Cardiac septum (tissue), 1 donor: ENCODE measurements at regions of chr3 and their contacts with region 1.

Region 1: DNA sequence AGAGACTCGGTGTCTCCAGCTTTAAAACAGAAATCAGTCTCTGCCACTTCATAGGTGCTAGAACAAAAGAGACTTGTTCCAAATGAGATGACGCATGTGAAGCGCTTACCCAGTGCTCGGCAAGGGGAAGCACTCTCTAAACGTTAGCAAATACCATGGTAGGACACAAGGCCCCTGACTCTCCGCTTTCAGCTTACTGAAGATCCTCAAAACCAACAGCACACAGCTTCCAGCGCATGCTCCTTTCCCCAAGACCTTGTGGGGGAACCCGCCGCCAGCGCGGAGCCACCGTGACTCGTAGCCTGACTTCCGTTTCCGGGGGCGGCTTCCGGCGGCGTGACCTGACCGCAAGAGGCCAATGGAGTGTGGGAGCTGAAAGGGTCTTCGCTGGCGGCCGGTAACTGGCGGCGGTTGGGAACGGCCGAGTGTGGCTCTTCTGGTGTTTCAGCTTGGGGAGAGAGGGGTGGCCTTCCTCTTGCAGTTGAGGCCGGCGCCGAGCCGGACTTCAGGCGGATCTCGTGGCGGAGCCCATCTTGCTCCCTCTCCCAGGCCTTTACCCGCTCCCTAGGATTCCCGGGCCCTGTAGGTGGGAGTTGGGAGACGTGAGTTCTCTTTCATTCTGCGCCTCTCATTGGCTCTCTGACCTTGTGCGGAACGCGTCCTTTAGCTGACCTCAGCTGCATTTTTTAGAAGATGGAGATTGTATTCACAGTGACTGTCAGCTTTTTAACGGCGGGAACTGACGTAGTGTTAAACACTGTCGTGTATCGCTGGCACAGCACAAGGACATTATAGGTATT is at the start of gene THUMPD3:
- DNase-seq: peak; percentile 97
- total RNA-seq, gene THUMPD3: 53.5 TPM

Region 2: GRCh38 chr3:9396700-9397521 is 34.0 kb after region 1 on chr3:
- intact Hi-C with region 1: loop called (anchors 5 kb)
- DNase-seq: peak; percentile 100

Region 3: DNA sequence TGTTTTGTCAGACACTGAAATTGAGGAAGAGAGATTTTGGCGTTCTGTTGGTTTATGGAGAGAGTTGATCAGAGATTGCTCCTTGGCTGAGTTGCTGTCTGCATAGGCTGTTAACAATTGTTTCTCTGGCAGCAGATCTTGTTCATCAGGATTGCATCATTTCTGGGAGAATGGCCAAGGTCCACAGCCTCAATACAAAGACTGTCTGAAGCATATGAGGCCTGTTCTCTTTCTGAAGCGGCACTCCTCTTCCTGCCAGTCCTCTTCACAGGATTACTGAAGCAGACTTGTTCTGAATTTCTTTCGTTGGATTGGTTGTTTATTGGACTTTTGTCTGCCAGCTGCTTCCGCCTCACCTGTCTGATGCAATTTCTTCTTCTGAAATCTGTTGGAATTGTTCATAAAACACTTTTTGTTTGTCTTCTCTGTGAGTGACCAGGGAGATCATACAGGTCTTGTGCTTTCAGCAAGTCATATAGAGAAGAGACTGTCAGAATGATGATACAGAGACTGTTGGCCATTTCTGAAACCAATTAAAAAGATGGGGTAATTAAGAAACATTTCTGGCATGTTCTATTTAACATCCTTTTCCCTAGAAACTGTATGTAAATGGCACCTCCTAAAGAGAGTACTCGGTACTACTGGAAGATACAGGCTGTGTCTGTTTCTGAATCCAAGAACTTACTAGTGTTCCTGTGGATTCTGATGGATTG is 59.9 kb after region 1 on chr3:
- intact Hi-C with region 1: loop called (anchors 2 kb)
- DNase-seq: no peak

Region 4: GRCh38 chr3:9649791-9650521 is 287.0 kb after region 1 on chr3:
- intact Hi-C with region 1: loop called (anchors 10 kb)
- DNase-seq: peak; percentile 63